Prostate gland (tissue), 2 donors: ENCODE measurements at regions of chr2 and their contacts with region 1.

Region 1: DNA sequence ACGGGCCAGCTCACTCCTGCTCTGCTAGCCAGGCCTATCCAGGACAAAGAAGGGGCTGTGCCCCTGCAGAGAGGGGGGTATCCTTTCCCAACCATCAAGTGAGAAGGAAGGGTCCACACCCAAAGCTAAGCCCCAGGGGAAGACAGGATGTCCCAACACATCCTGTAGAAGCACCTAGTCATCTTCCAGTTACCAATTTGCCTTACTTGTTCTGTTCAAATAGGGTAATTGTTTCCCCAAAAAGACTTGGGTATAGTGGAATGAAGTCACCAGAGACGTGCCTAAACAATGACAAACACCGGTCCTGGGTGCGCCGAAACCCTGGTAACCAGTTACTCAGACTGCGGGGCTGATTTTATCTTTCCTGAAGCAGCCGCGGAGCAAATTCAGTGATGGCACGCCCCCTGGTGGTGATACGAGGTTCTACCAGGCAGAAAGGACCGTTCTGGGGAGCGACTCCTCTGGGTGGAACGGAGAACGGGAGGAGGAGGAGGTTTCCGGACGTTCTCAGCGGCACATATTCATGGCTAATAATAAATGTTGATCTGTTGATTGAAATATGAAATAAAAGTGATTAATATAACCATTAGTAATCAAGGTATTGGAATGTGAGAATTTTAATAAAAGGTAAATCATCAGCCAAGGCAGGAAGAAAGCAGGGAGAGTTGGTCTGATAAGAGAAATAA is 109.3 kb upstream of the STON1 start:
- DNase-seq: peak; percentile 85
- H3K4me3 ChIP-seq: no peak overlapping the region
- H3K27ac ChIP-seq: no peak overlapping the region
- H3K4me1 ChIP-seq: peaks cover 8% of the 10 kb centered on the region
- H3K27me3 ChIP-seq: no peaks in the 10 kb centered on the region
- CTCF ChIP-seq: peak; percentile 94 to 98 (median 96)
- POLR2A ChIP-seq: no peak

Region 2: GRCh38 chr2:47782671-47783485 is 637.8 kb before region 1 on chr2 and contains the start of gene MSH6:
- intact Hi-C with region 1: loop called (anchors 5 kb)
- DNase-seq: peak; percentile 89
- H3K4me3 ChIP-seq: peak within 1 kb of the TSS; percentile 83 to 95
- H3K27ac ChIP-seq: peak within 1 kb of the TSS; percentile 94
- H3K4me1 ChIP-seq: no peaks in the 10 kb centered on the region
- H3K27me3 ChIP-seq: no peaks in the 10 kb centered on the region
- CTCF ChIP-seq: peak in 1 of 4 experiments; percentile 42
- POLR2A ChIP-seq: peak; percentile 91
- total RNA-seq, gene MSH6: 51.6 to 71.7 TPM